ENCODE measurements at regions of chr14 and their contacts with region 1.

Region 1: GRCh38 chr14:44449680-44450079 is 57.4 kb downstream of the FSCB start:
- DNase-seq: peak; percentile 47 to 59
- H3K4me3 ChIP-seq: no peak overlapping the region
- H3K4me3 Mint-ChIP-seq: peak overlapping the region; percentile 43
- H3K27ac Mint-ChIP-seq: peak overlapping the region; percentile 69
- H3K4me1 ChIP-seq: peaks cover 22% of the 10 kb centered on the region
- H3K4me1 Mint-ChIP-seq: peaks cover 25% of the 10 kb centered on the region
- H3K27me3 ChIP-seq: no peaks in the 10 kb centered on the region
- H3K27me3 Mint-ChIP-seq: no peaks in the 10 kb centered on the region
- CTCF ChIP-seq: no peak

Region 2: DNA sequence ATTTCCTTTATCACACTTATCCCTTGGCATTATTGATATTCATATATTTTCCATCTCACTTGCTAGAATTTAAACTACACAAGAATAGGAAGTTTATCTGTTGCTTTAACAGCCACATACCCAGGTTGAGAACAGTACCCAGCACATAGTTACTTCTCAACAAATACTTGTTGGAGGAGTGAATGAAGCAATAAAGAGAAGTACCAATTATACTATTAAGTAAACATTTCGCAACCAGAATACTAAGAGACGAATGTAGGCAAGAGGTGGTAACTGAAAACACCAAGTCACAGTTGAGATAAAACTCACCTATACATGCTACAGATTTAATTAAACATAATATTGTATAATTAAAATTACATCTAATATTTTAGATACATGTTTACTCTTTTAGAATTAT is 53.4 kb before region 1 on chr14:
- CTCF ChIA-PET with region 1: no interaction called
- POLR2A ChIA-PET with region 1: no interaction called
- intact Hi-C with region 1: loop called (anchors 1 kb)
- DNase-seq: no peak
- H3K4me3 ChIP-seq: no peak overlapping the region
- H3K4me3 Mint-ChIP-seq: no peak overlapping the region
- H3K27ac Mint-ChIP-seq: no peak overlapping the region
- H3K4me1 ChIP-seq: peaks cover 13% of the 10 kb centered on the region
- H3K4me1 Mint-ChIP-seq: no peaks in the 10 kb centered on the region
- H3K27me3 ChIP-seq: no peaks in the 10 kb centered on the region
- H3K27me3 Mint-ChIP-seq: no peaks in the 10 kb centered on the region
- CTCF ChIP-seq: no peak

Region 3: DNA sequence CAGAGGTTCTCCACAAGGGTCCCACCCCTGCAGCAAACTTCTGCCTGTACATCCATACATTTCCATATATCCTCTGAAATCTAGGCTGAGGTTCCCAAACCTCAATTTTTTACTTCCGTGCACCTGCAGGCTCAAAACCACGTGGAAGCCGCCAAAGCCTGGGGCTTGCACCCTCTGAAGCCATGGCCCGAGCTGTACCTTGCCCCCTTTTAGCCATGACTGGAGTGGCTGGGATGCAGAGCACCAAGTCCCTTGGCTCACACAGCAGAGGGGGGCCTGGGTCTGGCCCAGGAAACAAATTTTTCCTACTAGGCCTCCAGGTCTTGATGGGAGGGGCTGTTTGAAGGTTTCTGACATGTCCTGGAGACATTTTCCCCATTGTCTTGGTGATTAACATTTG is 27.0 kb before region 1 on chr14:
- CTCF ChIA-PET with region 1: no interaction called
- POLR2A ChIA-PET with region 1: no interaction called
- intact Hi-C with region 1: no loop called
- DNase-seq: no peak
- H3K4me3 ChIP-seq: no peak overlapping the region
- H3K4me3 Mint-ChIP-seq: no peak overlapping the region
- H3K27ac Mint-ChIP-seq: no peak overlapping the region
- H3K4me1 ChIP-seq: peaks cover 12% of the 10 kb centered on the region
- H3K4me1 Mint-ChIP-seq: peaks cover 11% of the 10 kb centered on the region
- H3K27me3 ChIP-seq: no peaks in the 10 kb centered on the region
- H3K27me3 Mint-ChIP-seq: no peaks in the 10 kb centered on the region
- CTCF ChIP-seq: no peak

Region 4: GRCh38 chr14:44438936-44439335 is 10.7 kb before region 1 on chr14:
- CTCF ChIA-PET with region 1: no interaction called
- POLR2A ChIA-PET with region 1: no interaction called
- intact Hi-C with region 1: no loop called
- DNase-seq: no peak
- H3K4me3 ChIP-seq: no peak overlapping the region
- H3K4me3 Mint-ChIP-seq: no peak overlapping the region
- H3K27ac Mint-ChIP-seq: no peak overlapping the region
- H3K4me1 ChIP-seq: no peaks in the 10 kb centered on the region
- H3K4me1 Mint-ChIP-seq: no peaks in the 10 kb centered on the region
- H3K27me3 ChIP-seq: no peaks in the 10 kb centered on the region
- H3K27me3 Mint-ChIP-seq: no peaks in the 10 kb centered on the region
- CTCF ChIP-seq: no peak

Measured in Caco-2 (cell line).